ENCODE measurements at regions of chr6 and their contacts with region 1.

Region 1: GRCh38 chr6:11270030-11271027 is 37.9 kb upstream of the NEDD9 start:
- DNase-seq: peak; percentile 76
- H3K4me3 ChIP-seq: no peak overlapping the region
- H3K27ac ChIP-seq: peak overlapping the region; percentile 62 to 82 (median 80)
- H3K4me1 ChIP-seq: peaks cover 6 to 65% (median 46%) of the 10 kb centered on the region in 4 donors
- H3K27me3 ChIP-seq: no peaks in the 10 kb centered on the region
- CTCF ChIP-seq: no peak
- EP300 ChIP-seq: peak; percentile 80
- POLR2A ChIP-seq: peak; percentile 60

Region 2: GRCh38 chr6:10603219-10603618 is 667.1 kb before region 1 on chr6:
- in situ Hi-C with region 1: no loop called
- intact Hi-C with region 1: loop called (anchors 5 kb)
- DNase-seq: no peak
- H3K4me3 ChIP-seq: no peak overlapping the region
- H3K27ac ChIP-seq: no peak overlapping the region
- H3K4me1 ChIP-seq: peaks cover 0 to 5% (median 0%) of the 10 kb centered on the region in 4 donors
- H3K27me3 ChIP-seq: no peaks in the 10 kb centered on the region
- CTCF ChIP-seq: no peak
- EP300 ChIP-seq: no peak
- POLR2A ChIP-seq: no peak

Measured in transverse colon (tissue), 4 donors.